ENCODE measurements at regions of chr9 and their contacts with region 1.

Region 1: DNA sequence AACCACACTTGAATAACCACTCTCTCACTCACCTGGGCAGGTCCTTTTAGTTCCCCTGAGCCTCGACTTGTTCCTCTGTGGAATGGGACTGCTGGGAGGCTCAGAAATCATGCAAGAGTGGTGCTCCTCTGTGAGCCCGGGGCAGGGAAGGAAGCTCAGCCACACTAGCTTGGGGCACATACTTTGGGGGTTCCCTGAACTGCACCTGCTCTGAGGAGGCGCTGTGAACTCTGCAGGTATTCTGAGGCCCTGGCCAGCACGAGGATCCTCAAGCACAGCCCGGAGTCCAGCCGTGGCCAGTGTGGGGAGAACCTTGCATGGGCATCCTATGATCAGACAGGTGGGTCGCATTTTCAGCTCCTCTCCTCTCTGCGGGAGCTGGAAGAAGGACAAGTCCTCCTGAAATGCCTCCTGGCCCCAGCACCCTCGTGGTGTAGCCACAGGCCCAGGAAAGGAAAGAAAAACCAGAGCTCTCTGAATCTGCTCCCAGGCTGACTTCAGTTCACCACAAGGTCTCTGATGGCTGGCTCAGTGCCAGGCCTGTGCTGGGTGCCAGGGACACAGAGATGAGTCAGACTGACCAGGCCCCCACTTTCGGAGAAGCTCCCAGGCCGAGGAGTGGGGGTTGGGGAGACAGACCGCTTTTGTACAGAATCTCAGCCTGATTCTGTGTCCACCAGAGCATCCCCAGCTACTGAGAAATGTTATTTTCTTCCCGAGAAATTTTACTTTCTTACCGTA is 11.9 kb downstream of the GLIPR2 start:
- DNase-seq: peak; percentile 92
- H3K4me3 ChIP-seq: peak overlapping the region; percentile 7; the same call in 1 of the 2 replicates
- H3K27ac ChIP-seq: peak overlapping the region; percentile 70
- H3K27me3 ChIP-seq: no peaks in the 10 kb centered on the region
- CTCF ChIP-seq: no peak

Region 2: DNA sequence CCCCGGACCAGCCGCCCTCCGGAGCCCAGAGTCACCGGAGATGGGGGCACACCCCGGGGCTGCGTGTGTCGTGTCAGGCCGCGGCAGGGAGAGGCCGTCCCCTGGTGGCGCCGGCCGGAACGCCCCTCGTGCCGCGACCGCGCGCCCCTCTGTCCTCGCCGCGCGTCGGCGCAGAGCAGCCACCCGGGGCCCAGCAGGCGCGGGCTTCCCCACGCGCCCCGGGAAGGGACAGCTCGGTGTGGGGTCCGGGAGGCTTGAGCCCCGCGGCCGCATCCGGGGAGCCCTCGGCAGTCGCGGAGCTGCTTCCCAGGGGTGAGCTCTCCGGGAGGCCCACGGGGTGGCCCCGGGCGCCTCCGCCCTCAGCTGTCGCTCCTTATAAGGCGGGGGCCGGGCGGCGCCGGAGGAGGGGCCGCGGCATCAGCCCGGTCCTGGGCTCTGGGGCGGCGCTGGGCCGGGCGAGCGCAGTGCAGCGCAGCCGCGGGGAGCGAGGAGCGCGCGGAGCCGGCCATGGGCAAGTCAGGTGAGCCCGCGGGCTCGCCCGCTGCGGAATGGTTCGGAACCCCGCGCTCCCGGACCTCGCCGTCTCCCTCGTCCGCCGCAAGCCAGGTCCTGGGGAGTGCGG is 12.1 kb before region 1 on chr9 and contains the start of gene GLIPR2:
- CTCF ChIA-PET with region 1: no interaction called
- POLR2A ChIA-PET with region 1: interaction called, 14 read pairs
- DNase-seq: no peak
- H3K4me3 ChIP-seq: peak within 1 kb of the TSS; percentile 76
- H3K27ac ChIP-seq: peak within 1 kb of the TSS; percentile 39
- H3K27me3 ChIP-seq: no peaks in the 10 kb centered on the region
- CTCF ChIP-seq: no peak
- polyA plus RNA-seq, gene GLIPR2: 108 and 115 TPM in 2 replicates

Region 3: DNA sequence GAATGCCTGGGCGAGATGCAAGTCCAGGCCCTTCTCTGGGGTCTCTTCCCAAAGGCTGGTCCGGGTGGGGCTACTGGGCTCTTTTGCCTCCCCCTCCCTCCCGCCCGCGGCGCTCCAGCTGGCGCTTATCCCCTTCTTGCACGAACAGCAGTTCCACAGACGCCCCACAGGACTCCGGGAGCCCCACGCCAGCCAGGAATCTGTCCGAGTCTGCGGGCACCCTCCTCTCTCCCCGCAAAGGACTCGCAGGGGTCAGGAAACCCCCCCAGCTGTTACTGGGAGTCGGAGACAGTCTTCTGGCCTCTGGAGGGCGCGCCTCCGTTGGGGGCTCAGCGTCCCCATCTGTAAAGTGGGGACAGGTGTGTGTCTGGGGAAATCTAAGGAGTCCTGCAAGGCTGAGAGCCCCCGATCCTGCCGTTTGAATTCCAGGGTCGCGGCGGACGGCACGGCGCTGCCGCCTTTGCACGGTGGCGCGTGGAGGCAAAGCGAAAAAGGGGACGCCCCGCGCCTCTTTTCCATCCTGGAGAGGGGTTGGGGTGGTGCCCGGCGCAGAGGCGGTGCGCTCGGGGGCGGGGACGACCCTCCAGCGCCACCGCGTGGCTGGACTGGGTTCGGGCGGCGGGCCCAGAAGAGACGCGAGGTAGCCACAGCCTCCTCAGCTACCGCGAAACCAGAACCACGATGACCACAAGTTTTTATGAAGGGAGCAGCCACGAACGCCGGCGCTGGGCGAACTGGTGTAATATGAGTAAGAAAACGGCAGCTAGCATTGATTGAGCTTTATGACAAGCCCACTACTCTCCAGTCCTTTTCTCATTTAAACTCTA is 17.8 kb after region 1 on chr9:
- CTCF ChIA-PET with region 1: interaction called, 11 read pairs
- POLR2A ChIA-PET with region 1: interaction called, 6 read pairs
- DNase-seq: no peak
- H3K4me3 ChIP-seq: peak overlapping the region; percentile 63
- H3K27ac ChIP-seq: peak overlapping the region; percentile 57
- H3K27me3 ChIP-seq: no peaks in the 10 kb centered on the region
- CTCF ChIP-seq: peak; percentile 84